ENCODE measurements at regions of chr6 and their contacts with region 1.

Region 1: GRCh38 chr6:111210194-111210728 is 123.0 kb downstream of the SLC16A10 start:
- DNase-seq: no peak
- H3K4me3 ChIP-seq: no peak overlapping the region
- H3K27ac ChIP-seq: no peak overlapping the region
- H3K4me1 ChIP-seq: peaks cover 0 to 5% (median 0%) of the 10 kb centered on the region in 3 donors
- H3K27me3 ChIP-seq: no peaks in the 10 kb centered on the region
- CTCF ChIP-seq: peak; percentile 41 to 74 (median 59)
- POLR2A ChIP-seq: no peak

Region 2: DNA sequence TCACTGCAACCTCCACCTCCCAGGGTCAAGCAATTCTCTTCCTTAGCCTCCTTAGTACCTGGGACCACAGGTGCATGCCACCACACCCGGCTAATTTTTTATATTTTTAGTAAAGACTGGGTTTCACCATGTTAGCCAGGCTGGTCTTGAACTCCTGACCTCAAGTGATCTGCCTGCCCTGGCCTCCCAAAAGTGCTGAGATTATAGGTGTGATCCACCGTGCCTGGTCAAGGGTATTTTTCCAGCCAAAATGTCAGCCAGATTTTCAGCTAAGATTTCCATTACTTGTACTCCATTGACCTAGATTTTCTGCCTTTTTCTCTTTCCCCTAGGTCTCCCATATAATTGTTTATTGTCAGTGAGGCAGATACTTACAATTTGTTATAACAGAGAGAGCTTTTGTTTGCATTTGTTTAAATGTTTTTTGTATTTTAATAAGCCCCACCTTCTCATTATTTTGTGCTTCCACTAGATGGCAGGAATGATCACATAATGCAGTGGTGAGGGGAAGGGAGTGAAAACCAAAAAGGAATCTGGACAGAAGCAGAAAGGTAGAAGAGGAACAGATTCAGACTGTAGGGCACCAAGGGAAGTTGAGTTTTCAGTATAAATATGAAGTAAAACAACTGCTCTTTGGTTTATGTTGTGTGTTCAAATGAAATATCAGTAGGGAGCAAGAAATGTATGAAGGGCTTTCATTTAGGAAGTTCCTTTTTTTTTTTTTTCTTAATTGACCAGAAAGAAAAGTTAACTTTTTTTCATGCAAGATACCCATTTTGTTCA is 198.7 kb before region 1 on chr6:
- intact Hi-C with region 1: loop called (anchors 10 kb)
- DNase-seq: no peak
- H3K4me3 ChIP-seq: no peak overlapping the region
- H3K27ac ChIP-seq: no peak overlapping the region
- H3K4me1 ChIP-seq: peaks cover 0 to 6% (median 0%) of the 10 kb centered on the region in 3 donors
- H3K27me3 ChIP-seq: no peaks in the 10 kb centered on the region
- CTCF ChIP-seq: peak in 5 of 6 experiments; percentile 37 to 64 (median 47)
- POLR2A ChIP-seq: no peak

Region 3: GRCh38 chr6:111057074-111057752 is 153.0 kb before region 1 on chr6:
- intact Hi-C with region 1: loop called (anchors 5 kb)
- DNase-seq: no peak
- H3K4me3 ChIP-seq: no peak overlapping the region
- H3K27ac ChIP-seq: no peak overlapping the region
- H3K4me1 ChIP-seq: no peaks in the 10 kb centered on the region
- H3K27me3 ChIP-seq: peaks cover 0 to 26% (median 0%) of the 10 kb centered on the region in 4 donors
- CTCF ChIP-seq: peak; percentile 53 to 70 (median 63)
- POLR2A ChIP-seq: no peak